ENCODE measurements at regions of chr7 and their contacts with region 1.

Region 1: DNA sequence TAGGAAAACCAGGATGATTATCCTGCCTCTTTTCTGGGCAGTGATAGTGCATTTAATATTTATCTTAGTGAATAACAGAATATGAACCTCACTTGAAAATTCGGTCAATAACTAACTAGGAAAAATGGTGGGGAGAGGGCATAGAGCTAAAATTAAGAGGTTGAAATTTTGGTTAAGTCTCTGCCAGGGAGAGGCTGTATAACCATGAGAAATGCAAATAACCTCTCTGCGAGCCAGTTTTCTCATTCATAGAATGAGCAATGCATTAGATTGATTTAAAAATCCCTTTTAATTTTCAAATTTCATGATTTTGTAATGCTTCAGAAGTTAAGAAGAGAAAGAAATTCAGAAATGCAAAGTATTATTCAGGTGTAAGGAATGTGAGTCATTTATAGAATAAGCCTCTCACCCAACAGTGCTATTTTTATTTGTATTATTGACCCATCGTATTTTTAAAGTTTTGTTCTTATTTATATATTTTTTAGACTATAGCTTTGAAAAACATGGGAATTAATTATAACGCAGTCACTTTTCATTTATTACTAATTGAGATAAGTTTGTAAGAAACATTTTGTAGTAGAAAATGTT is 104.7 kb downstream of the PHF14 start:
- DNase-seq: no peak
- ATAC-seq: no peak
- H3K4me3 Mint-ChIP-seq: no peak overlapping the region
- H3K27ac Mint-ChIP-seq: no peak overlapping the region
- H3K4me1 Mint-ChIP-seq: peaks cover 22% of the 10 kb centered on the region
- H3K27me3 Mint-ChIP-seq: no peaks in the 10 kb centered on the region
- CTCF ChIP-seq: no peak

Region 2: DNA sequence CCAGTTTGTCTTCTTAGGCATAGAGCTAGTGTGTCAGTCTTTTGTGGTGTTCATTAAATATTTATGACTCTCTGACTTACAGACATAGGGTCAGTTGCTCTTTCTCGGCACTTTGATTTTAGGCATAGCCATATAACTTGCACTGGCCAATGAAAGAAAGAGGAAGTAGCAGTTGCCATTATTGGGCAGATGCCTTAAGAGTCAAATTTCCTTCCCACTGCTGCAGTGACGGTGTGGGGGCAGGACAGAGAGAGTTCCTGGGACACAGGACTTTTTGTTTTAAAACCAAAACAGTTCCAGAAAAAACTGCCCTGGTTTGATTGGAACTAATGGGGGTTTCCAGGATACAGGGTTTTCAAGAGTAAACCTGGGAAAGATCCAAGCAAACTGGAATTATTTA is 164.9 kb before region 1 on chr7:
- CTCF ChIA-PET with region 1: no interaction called
- POLR2A ChIA-PET with region 1: no interaction called
- DNase-seq: no peak
- ATAC-seq: no peak
- H3K4me3 Mint-ChIP-seq: no peak overlapping the region
- H3K27ac Mint-ChIP-seq: no peak overlapping the region
- H3K4me1 Mint-ChIP-seq: peaks cover 29% of the 10 kb centered on the region
- H3K27me3 Mint-ChIP-seq: no peaks in the 10 kb centered on the region; the same call in 1 of the 2 replicates
- CTCF ChIP-seq: no peak

Region 3: GRCh38 chr7:11035661-11036060 is 42.7 kb before region 1 on chr7:
- CTCF ChIA-PET with region 1: no interaction called
- POLR2A ChIA-PET with region 1: interaction called, 12 read pairs
- DNase-seq: no peak
- ATAC-seq: no peak
- H3K4me3 Mint-ChIP-seq: no peak overlapping the region
- H3K27ac Mint-ChIP-seq: peak overlapping the region; percentile 66
- H3K4me1 Mint-ChIP-seq: no peaks in the 10 kb centered on the region
- H3K27me3 Mint-ChIP-seq: no peaks in the 10 kb centered on the region
- CTCF ChIP-seq: no peak

Region 4: DNA sequence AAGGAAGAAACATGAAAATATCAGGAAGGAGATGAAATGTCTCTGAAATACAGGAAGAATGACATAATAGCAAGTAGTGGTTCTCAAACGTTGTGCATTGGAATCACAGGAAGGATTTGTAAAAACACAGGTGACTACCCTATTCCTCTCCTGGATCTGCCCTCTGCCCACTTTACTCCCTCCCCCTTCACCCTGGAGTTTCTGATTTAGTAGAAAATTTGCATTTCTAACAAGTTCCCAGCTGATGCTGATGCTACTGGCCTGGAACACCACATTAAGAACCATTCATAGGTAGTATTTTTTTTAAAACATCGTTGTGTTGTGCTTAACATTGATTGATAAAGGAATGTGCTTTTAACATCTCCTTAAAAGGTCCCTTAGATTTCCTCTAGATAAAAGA is 26.2 kb after region 1 on chr7:
- CTCF ChIA-PET with region 1: no interaction called
- POLR2A ChIA-PET with region 1: no interaction called
- DNase-seq: no peak
- ATAC-seq: peak; percentile 69
- H3K4me3 Mint-ChIP-seq: no peak overlapping the region
- H3K27ac Mint-ChIP-seq: no peak overlapping the region
- H3K4me1 Mint-ChIP-seq: peaks cover 8% of the 10 kb centered on the region
- H3K27me3 Mint-ChIP-seq: no peaks in the 10 kb centered on the region
- CTCF ChIP-seq: no peak

Measured in WTC11 (cell line).